ENCODE measurements at regions of chr5 and their contacts with region 1.

Region 1: GRCh38 chr5:79133657-79134451 is 22.2 kb downstream of the BHMT start:
- DNase-seq: peak; percentile 28
- H3K4me3 Mint-ChIP-seq: peak overlapping the region; percentile 64
- H3K27ac Mint-ChIP-seq: peak overlapping the region; percentile 80
- H3K4me1 Mint-ChIP-seq: peaks cover 10% of the 10 kb centered on the region
- H3K27me3 Mint-ChIP-seq: peaks cover 5% of the 10 kb centered on the region

Region 2: DNA sequence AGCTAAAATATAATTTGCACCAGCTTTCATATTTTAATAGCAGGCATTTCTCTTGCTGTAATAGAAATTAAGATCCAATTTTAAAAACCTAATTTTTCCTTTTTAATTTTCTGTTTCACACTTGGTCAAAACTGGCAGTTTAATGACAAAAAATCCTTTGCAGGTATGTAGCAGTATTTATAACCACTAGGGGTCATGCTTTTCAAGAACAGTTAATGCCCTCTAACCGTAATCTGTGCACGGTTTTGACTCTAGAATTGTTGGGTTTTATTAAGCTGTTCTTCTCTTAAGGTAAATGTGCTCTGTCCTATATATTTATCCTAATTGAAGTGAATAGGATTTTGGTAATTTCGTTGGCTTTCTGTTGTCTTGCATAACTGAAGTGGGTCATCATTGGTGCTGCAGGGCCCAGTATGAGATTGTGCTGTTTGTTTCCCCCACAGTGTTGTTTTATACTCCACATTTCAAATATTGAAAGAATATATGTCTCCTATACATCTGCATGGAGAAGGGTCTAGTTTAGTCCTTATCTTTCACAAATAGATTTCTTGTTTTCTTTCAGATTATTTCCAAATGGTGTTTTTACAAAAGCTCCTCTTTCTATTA is 666.0 kb before region 1 on chr5:
- intact Hi-C with region 1: loop called (anchors 2 kb)
- DNase-seq: no peak
- H3K4me3 Mint-ChIP-seq: no peak overlapping the region
- H3K27ac Mint-ChIP-seq: no peak overlapping the region
- H3K4me1 Mint-ChIP-seq: no peaks in the 10 kb centered on the region
- H3K27me3 Mint-ChIP-seq: no peaks in the 10 kb centered on the region

Region 3: DNA sequence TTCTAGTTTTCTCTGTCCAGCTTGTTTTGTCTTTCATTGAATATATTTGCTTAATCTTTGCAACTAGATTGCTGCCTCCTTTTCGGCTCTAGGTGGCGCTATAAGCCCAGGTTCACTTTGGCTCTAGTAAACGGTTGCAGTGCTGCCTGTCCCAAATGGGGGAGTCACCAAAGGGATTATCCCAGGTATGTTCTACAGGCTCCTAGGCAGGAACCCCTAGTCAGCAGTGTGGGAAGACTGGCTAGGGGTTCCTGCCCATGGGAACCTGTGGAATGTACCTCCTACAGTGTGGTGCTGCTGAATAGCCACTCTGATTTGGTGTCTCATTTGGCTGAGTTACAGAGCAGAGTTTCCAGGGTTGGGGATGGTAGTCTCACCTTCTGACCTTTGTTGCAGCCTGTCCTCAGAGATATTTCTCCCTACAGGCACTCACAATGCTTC is 233.9 kb before region 1 on chr5:
- intact Hi-C with region 1: loop called (anchors 1 kb)
- DNase-seq: no peak
- H3K4me3 Mint-ChIP-seq: no peak overlapping the region
- H3K27ac Mint-ChIP-seq: no peak overlapping the region
- H3K4me1 Mint-ChIP-seq: no peaks in the 10 kb centered on the region
- H3K27me3 Mint-ChIP-seq: no peaks in the 10 kb centered on the region

Region 4: DNA sequence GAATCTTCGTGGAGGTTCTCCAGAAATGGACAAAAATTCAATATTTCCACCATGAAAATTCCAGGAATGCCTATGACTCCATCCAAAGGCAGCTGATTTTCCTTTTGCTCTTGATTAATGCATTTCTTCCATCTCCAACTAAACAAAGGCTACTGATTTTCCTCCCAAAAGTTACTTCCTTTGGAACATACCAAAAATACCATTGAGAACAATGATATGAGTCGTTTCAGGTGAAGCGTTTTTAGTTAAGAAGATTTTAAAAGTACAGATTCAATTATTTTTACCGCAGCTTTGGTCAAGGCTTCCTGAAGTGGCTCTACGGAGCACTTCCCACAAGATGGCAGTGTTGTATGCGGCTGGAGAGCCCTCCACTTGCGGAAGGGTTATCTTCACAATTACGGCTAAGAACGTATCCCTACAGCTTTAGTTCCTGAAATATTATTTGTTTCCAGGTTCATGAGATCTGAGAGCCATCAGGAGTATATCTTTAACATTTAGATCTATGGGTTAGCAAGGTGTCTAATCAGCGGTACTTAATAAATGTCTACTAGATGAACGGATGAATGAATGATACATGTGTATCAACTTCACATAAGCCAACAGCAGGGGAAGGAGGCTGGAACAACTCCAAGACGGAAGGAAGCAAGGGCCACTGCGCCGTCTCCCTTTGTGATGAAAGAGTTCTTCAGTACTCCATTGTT is 112.8 kb before region 1 on chr5:
- intact Hi-C with region 1: loop called (anchors 1 kb)
- DNase-seq: no peak
- H3K4me3 Mint-ChIP-seq: no peak overlapping the region
- H3K27ac Mint-ChIP-seq: no peak overlapping the region
- H3K4me1 Mint-ChIP-seq: peaks cover 6% of the 10 kb centered on the region
- H3K27me3 Mint-ChIP-seq: peaks cover 59% of the 10 kb centered on the region

Region 5: DNA sequence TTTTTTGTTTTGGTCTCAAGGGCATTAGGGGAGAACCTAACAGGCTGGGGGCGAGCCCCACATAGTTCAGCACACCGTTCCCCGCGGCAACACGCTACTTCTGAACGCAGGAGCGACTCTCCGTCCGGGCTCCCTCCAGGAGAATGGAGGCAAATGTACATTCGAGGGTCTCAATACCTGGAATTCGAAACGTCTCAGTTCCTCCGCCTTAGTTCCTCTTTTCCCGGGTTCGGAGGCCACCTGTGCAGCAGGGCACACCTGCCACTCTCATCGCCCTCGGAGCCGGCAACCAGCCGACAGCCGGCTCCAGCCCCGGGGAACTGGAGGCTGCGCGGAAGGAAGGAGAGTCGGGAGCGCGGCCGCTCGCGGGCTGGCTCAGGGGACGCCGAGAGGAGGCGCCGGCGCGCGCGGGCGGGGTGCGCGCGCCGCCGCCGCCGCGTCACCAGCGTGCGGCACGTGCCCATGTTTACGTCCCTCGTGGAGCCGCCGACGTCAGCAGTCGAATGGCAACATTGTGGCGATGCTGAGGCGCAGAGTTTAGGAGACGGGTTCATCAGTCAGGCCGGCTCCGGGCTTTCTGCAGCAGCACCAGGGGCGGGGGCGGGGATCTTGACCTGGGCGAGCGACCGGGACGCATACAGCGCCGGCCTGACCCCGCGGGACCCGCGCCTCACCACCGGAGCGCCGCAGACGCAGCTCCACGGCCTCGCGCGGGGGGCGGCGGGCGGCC is 101.9 kb after region 1 on chr5 and contains the start of gene JMY:
- intact Hi-C with region 1: loop called (anchors 10 kb)
- DNase-seq: peak; percentile 77
- H3K4me3 Mint-ChIP-seq: peak within 1 kb of the TSS; percentile 94
- H3K27ac Mint-ChIP-seq: peak within 1 kb of the TSS; percentile 95
- H3K4me1 Mint-ChIP-seq: peaks cover 33% of the 10 kb centered on the region
- H3K27me3 Mint-ChIP-seq: peaks cover 2% of the 10 kb centered on the region
- total RNA-seq, gene JMY: 5.5 and 5.9 TPM in 2 replicates

Region 6: DNA sequence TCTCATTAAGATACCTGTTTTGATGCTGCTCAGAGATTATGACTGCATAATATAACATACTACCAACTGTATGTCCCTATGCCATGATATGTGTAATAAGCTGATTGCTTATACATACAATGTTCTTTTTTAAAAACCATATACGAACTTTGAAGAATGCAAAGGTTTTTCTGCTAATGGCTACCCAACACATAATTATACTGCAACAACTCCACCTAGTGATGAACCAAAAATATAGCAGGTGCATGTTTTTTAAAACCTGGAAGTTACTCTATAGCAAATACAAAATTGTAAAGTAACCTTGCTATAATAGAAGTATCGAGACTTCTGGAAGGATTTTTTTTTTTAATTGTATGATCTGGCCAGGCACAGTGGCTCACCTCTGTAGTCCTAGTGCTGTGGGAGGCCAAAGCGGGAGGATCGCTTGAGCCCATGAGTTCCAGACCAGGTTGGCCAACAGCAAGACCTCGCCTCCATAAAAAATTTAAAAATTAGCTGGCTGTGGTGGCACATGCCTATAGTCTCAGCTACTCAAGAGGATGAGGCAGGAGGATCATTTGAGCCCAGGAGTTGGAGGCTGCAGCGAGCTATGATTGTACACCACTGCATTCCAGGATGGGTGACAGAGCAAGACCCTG is 331.0 kb after region 1 on chr5:
- intact Hi-C with region 1: loop called (anchors 1 kb)
- DNase-seq: no peak
- H3K4me3 Mint-ChIP-seq: no peak overlapping the region
- H3K27ac Mint-ChIP-seq: no peak overlapping the region
- H3K4me1 Mint-ChIP-seq: no peaks in the 10 kb centered on the region
- H3K27me3 Mint-ChIP-seq: peaks cover 2% of the 10 kb centered on the region

Region 7: DNA sequence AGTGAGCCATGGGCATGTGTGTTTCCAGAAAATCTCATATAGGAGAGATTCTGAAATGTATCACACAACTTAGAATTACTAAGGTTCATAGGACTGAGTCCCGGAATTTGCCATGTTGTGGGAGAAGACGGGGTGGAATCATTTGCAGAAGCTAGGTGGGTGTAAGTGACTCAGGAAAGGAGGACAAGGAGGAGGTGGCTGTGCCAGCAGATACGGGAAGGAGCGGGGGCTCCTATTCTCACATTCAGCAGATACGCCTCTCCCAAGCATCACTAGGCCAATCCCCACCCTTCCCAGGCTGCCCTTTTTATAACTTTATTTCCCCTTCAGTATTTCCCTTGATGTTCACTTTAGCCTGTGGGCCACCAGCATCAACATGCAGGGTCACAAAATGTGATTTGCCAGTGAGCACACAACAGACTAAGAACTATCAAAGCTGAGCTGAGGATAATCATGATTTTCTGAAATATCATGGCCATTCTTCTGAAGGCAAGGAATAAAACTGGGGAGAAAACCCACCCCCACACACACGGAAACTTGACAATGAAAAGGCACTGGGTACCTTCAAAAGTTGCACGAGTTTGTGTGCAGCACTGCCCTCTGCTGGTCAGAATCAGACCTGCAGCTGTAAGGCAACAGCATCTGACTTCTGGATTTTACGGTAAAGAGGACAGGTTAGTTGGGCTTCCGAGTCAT is 724.0 kb after region 1 on chr5:
- intact Hi-C with region 1: loop called (anchors 1 kb)
- DNase-seq: peak; percentile 62
- H3K4me3 Mint-ChIP-seq: no peak overlapping the region
- H3K27ac Mint-ChIP-seq: no peak overlapping the region
- H3K4me1 Mint-ChIP-seq: no peaks in the 10 kb centered on the region
- H3K27me3 Mint-ChIP-seq: peaks cover 17% of the 10 kb centered on the region

Measured in activated T-helper 1 cell treated with anti-CD3 and anti-CD28 coated beads, Interleukin-12 subunit alpha, Interleukin-12 subunit beta, Interleukin-2, Interleukin-4 antibody, amounts not matched to agents 30 ng/mL and 10 ng/mL and 1 ng/mL, durations not matched to agents 14 hours and 24 hours and 36 hours (primary cell).